H1 (cell line): ENCODE measurements at regions of chr1 and their contacts with region 1.

Region 1: GRCh38 chr1:44170281-44170823 is 28.9 kb upstream of the KLF18 start:
- DNase-seq: no peak
- H3K4me3 ChIP-seq: no peak overlapping the region
- H3K27ac ChIP-seq: no peak overlapping the region
- H3K4me1 ChIP-seq: no peaks in the 10 kb centered on the region; a peak in 1 of 7 replicates
- H3K27me3 ChIP-seq: no peaks in the 10 kb centered on the region
- CTCF ChIP-seq: peak in 2 of 3 experiments; percentile 13 to 26; a peak in 2 of 4 replicates
- EP300 ChIP-seq: no peak
- POLR2A ChIP-seq: no peak
- RAD21 ChIP-seq: peak; percentile 14 to 40; a peak in 3 of 4 replicates

Region 2: DNA sequence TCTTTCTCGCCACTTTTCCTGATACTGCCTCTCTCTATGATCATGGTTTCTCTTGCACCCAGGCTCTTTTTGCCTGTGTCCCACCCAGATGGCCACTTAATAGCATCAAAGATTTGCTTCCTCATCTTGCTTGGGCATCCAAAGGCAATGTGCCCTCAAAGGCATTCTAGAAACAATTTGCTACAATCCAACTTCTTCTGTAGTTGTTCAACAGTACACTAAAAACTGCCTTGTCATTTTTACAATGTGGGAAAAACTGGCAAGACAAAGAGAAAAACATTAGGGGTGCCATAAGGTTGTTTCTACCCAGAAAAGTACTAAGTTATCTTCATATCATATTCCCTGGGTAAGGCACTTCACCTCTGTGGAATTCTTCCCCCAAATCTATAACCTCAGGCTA is 12.4 kb before region 1 on chr1:
- CTCF ChIA-PET with region 1: interaction called, 10 read pairs
- POLR2A ChIA-PET with region 1: interaction called, 4 read pairs
- DNase-seq: no peak
- H3K4me3 ChIP-seq: no peak overlapping the region
- H3K27ac ChIP-seq: no peak overlapping the region
- H3K4me1 ChIP-seq: peaks cover 0 to 5% (median 0%) of the 10 kb centered on the region in 4 experiments; a peak in 1 of 7 replicates
- H3K27me3 ChIP-seq: no peaks in the 10 kb centered on the region
- CTCF ChIP-seq: no peak
- EP300 ChIP-seq: no peak
- POLR2A ChIP-seq: no peak
- RAD21 ChIP-seq: no peak